ENCODE measurements at regions of chr17 and their contacts with region 1.

Region 1: DNA sequence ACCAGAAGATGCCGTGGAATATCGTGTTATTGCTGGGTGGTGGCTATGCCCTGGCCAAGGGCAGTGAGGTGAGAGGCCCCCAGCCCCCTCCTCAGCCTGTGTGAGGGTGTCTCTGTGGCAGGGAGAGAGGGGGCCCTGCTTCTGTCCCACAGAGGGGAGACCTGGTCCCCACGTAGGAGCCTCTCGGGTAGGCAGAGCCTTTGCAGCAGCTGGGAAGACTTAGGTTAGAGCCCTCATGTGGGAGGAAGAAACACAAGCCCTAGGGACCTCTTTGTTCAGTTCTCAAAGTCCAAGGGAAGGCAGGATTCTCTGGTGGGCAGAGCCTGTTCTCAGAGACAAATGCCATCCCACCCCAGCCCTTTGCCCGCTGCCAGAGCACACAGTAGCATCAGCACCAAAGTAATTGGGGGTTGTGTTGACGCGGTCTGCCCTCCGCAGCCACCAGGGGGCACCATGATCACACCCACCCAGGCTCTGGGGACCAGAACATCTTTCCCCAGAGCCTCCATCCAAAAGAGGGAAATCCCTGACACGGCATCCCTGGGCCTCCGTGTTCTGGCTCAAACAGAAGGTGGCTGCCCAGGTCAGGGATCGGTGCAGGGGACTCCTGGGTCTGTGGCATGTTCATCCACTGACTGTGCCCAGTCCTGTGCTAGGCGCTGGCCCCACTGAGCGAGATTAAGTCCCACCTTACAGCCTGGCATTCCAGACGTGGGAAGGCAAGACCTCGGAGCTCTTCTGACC is 11.5 kb upstream of the FOXN1 start:
- DNase-seq: peak; percentile 69
- H3K4me3 ChIP-seq: no peak overlapping the region
- H3K27ac ChIP-seq: no peak overlapping the region
- H3K4me1 ChIP-seq: peaks cover 13% of the 10 kb centered on the region
- H3K27me3 ChIP-seq: no peaks in the 10 kb centered on the region
- CTCF ChIP-seq: peak; percentile 85 to 96 (median 94)
- POLR2A ChIP-seq: no peak

Region 2: GRCh38 chr17:28346746-28347246 is 147.8 kb before region 1 on chr17:
- intact Hi-C with region 1: no loop called
- DNase-seq: no peak
- H3K4me3 ChIP-seq: no peak overlapping the region
- H3K27ac ChIP-seq: no peak overlapping the region
- H3K4me1 ChIP-seq: no peaks in the 10 kb centered on the region
- H3K27me3 ChIP-seq: no peaks in the 10 kb centered on the region
- CTCF ChIP-seq: peak in 1 of 4 experiments; percentile 9
- POLR2A ChIP-seq: no peak

Region 3: DNA sequence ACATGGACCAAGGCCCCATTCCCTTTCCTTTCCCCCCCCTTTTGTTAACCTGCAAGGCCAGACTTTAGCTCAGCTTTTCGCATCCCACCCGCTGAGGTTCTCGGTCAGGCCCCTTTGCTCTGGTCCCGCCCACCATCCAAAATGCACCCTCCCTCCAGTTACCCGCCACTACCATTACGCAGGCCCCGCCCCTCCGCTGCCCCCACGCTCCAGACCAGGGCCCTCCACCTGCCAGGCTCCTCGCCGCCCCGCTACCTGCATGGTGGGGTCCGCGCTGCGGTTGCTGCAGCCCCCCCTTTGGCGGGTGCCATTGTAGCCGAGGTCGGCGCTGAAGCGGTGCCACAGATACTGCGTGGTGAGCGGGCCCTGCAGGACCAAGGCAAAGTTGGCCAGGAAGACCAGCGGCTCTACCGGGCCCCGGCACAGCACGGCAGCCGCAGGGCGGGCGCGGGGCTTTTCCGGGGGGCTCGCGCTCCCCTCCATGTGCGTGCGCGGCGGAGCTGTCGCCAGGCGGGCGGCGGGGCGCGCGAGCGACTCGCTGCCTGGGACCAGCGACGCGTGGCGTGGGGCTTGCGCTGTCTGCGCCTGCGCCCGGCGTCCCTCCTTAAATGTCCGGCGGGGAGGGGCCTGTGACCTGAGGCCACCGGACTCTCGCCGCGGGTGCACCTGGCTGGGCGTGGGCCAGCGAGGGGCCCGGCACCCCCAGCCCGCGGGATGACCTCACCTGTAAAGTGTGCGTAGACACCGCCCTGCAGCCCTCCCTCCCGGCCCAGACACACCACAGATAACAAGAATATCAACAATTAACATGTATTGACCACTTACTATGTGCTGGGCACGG is 88.8 kb before region 1 on chr17 and contains the start of gene SLC46A1:
- intact Hi-C with region 1: no loop called
- DNase-seq: peak; percentile 48
- H3K4me3 ChIP-seq: peak within 1 kb of the TSS; percentile 53 to 65
- H3K27ac ChIP-seq: peak within 1 kb of the TSS; percentile 17 to 33
- H3K4me1 ChIP-seq: peaks cover 2% of the 10 kb centered on the region
- H3K27me3 ChIP-seq: no peaks in the 10 kb centered on the region
- CTCF ChIP-seq: peak in 1 of 4 experiments; percentile 16
- POLR2A ChIP-seq: no peak
- total RNA-seq, gene SLC46A1: 14.9 to 20.1 TPM

Region 4: GRCh38 chr17:28540231-28540630 is 45.6 kb after region 1 on chr17:
- intact Hi-C with region 1: loop called (anchors 5 kb)
- DNase-seq: no peak
- H3K4me3 ChIP-seq: no peak overlapping the region
- H3K27ac ChIP-seq: no peak overlapping the region
- H3K4me1 ChIP-seq: no peaks in the 10 kb centered on the region
- H3K27me3 ChIP-seq: no peaks in the 10 kb centered on the region
- CTCF ChIP-seq: no peak
- POLR2A ChIP-seq: no peak